Activated CD8-positive, alpha-beta T cell treated with anti-CD3 and anti-CD28 coated beads for 36 hours (primary cell): ENCODE measurements at regions of chr7 and their contacts with region 1.

Region 1: DNA sequence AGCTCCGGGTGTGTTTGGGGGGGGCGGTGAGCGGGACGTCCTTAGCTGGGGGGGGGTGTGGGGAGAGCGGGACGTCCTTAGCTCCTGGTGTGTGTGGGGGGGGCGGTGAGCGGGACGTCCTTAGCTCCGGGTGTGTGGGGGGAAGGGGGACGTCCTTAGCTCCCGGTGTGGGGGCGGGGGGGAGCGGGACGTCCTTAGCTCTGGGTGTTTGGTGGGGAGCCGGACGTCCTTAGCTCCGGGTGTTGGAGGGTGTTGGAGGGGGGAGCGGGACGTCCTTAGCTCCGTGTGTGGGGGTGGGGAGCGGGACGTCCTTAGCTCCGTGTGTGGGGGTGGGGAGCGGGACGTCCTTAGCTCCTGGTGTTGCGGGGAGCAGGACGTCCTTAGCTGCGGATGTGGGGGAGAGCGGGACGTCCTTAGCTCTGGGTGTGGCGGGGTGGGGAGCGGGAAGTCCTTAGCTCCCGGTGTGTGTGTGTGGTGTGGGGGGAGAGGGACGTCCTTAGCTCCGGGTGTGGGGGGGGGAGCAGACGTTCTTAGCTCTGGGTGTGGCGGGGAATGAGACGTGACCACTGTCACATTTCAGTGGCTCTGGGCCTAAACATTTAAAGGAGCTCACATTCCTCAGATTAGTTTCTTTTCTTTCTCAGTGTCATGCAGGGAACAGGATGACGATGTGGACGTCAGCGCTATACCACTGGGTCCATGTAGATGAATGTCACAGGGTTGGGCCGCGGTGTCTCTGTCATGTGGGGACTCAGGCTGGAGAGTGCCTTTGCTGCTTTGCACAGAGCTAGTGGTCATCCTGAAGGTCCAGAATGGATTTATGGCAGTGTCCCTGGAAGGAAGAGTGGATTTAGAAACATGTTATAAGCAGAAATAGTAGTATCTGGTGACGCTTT is 7.5 kb downstream of the DYNC2I1 start:
- DNase-seq: peak; percentile 82
- ATAC-seq: peak; percentile 66
- H3K4me3 Mint-ChIP-seq: peak overlapping the region; percentile 73
- H3K27ac Mint-ChIP-seq: peak overlapping the region; percentile 83
- H3K4me1 Mint-ChIP-seq: peaks cover 50% of the 10 kb centered on the region
- H3K27me3 Mint-ChIP-seq: no peaks in the 10 kb centered on the region
- CTCF ChIP-seq: no peak

Region 2: GRCh38 chr7:158704704-158705468 is 159.0 kb before region 1 on chr7 and contains the start of gene NCAPG2:
- CTCF ChIA-PET with region 1: interaction called, 5 read pairs
- POLR2A ChIA-PET with region 1: interaction called, 3 read pairs
- intact Hi-C with region 1: loop called (anchors 10 kb)
- DNase-seq: peak; percentile 98
- ATAC-seq: peak; percentile 98
- H3K4me3 Mint-ChIP-seq: peak within 1 kb of the TSS; percentile 76
- H3K27ac Mint-ChIP-seq: peak within 1 kb of the TSS; percentile 89
- H3K4me1 Mint-ChIP-seq: peaks cover 35% of the 10 kb centered on the region
- H3K27me3 Mint-ChIP-seq: no peaks in the 10 kb centered on the region
- CTCF ChIP-seq: peak; percentile 26
- total RNA-seq, gene NCAPG2: 108 to 113 TPM

Region 3: GRCh38 chr7:158809596-158809995 is 54.3 kb before region 1 on chr7:
- CTCF ChIA-PET with region 1: interaction called, 3 read pairs
- POLR2A ChIA-PET with region 1: interaction called, 10 read pairs
- intact Hi-C with region 1: no loop called
- DNase-seq: peak; percentile 45
- ATAC-seq: peak; percentile 35
- H3K4me3 Mint-ChIP-seq: no peak overlapping the region
- H3K27ac Mint-ChIP-seq: peak overlapping the region; percentile 97
- H3K4me1 Mint-ChIP-seq: peaks cover 74% of the 10 kb centered on the region
- H3K27me3 Mint-ChIP-seq: no peaks in the 10 kb centered on the region
- CTCF ChIP-seq: no peak